GM12878 (cell line): ENCODE measurements at regions of chr19 and their contacts with region 1.

Region 1: DNA sequence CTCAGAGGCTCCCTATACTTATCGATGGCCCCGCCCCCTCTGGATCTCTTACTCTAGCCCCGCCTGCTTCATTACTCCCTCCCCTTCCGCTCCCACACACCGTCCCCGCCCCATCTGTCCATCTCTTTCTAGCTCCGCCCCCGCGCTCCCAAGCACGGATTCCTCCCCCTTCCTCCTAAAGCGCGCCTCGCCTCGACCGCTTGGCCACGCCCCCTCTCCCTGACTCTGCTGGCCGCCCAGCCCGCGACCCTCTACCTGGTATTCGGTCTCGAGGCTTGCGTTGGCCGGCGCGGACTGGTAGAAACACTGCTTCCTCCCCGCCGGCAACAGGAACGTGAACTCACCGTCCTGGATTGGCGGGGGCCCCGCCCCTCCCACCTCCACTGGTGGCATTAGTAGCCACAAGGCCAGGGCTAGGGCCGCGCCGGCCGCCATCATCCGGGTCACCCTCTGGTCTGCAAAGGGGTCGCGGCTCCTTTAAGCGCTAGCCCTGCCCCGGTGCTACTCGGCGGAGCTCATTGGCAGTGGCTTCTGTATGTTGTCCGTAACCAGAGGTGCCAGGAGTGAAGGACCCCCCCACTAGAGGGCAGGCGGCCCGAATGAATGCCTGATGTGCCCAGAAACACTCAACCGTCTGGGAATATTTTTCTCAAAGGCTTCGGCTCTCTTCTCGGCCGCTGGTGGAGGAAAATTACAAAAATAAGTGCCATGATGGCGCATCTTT is at the start of gene TMED1:
- DNase-seq: peak; percentile 91
- ATAC-seq: peak; percentile 98
- H3K4me3 ChIP-seq: peak within 1 kb of the TSS; percentile 78
- H3K27ac ChIP-seq: peak within 1 kb of the TSS; percentile 89
- H3K4me1 ChIP-seq: peaks cover 12% of the 10 kb centered on the region
- H3K27me3 ChIP-seq: no peaks in the 10 kb centered on the region
- CTCF ChIP-seq: peak in 1 of 3 experiments; percentile 42; a peak in 1 of 6 replicates
- EP300 ChIP-seq: no peak
- POLR2A ChIP-seq: peak; percentile 86
- RAD21 ChIP-seq: no peak
- polyA plus RNA-seq, gene TMED1: 0.60 to 2.8 TPM

Region 2: DNA sequence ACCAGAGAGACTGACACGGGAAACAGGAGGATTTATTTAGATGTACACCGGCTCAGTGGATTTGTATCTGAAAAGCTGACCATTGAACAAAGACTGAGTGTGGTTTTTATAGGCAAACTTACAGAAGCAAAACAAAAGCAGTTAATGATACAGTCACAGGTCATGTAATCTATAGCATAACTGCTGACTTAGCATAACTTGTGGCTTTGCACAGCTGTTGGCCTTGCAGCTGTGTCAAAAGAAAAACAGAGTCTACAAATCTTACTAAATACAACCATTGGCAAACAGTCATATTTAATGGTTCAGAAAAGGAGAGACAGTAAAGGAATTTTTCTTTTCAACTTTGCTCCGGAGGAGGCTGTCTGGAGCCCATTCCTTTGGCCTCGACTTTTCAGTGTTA is 184.1 kb before region 1 on chr19:
- CTCF ChIA-PET with region 1: no interaction called
- POLR2A ChIA-PET with region 1: no interaction called
- RAD21 ChIA-PET with region 1: no interaction called
- SMC1A ChIA-PET with region 1: no interaction called
- in situ Hi-C with region 1: no loop called
- intact Hi-C with region 1: no loop called
- DNase-seq: no peak
- ATAC-seq: no peak
- H3K4me3 ChIP-seq: no peak overlapping the region
- H3K27ac ChIP-seq: no peak overlapping the region
- H3K4me1 ChIP-seq: peaks cover 3% of the 10 kb centered on the region; the same call in 1 of the 2 replicates
- H3K27me3 ChIP-seq: no peaks in the 10 kb centered on the region
- CTCF ChIP-seq: no peak
- EP300 ChIP-seq: no peak
- POLR2A ChIP-seq: no peak
- RAD21 ChIP-seq: no peak

Region 3: GRCh38 chr19:10760273-10760944 is 75.5 kb before region 1 on chr19:
- CTCF ChIA-PET with region 1: interaction called, 3 read pairs
- POLR2A ChIA-PET with region 1: interaction called, 5 read pairs
- RAD21 ChIA-PET with region 1: interaction called, 6 read pairs
- SMC1A ChIA-PET with region 1: interaction called, 10 read pairs
- in situ Hi-C with region 1: no loop called
- intact Hi-C with region 1: no loop called
- DNase-seq: no peak
- ATAC-seq: peak; percentile 57
- H3K4me3 ChIP-seq: peak overlapping the region; percentile 57; the same call in 1 of the 2 replicates
- H3K27ac ChIP-seq: peak overlapping the region; percentile 82
- H3K4me1 ChIP-seq: peaks cover 15% of the 10 kb centered on the region
- H3K27me3 ChIP-seq: no peaks in the 10 kb centered on the region
- CTCF ChIP-seq: no peak
- EP300 ChIP-seq: no peak
- POLR2A ChIP-seq: no peak
- RAD21 ChIP-seq: no peak

Region 4: GRCh38 chr19:10870955-10871603 is 35.2 kb after region 1 on chr19 and contains the start of gene CARM1:
- CTCF ChIA-PET with region 1: interaction called, 68 read pairs
- POLR2A ChIA-PET with region 1: interaction called, 8 read pairs
- RAD21 ChIA-PET with region 1: interaction called, 32 read pairs
- SMC1A ChIA-PET with region 1: interaction called, 9 read pairs
- in situ Hi-C with region 1: no loop called
- intact Hi-C with region 1: no loop called
- DNase-seq: peak; percentile 79
- ATAC-seq: peak; percentile 84
- H3K4me3 ChIP-seq: peak within 1 kb of the TSS; percentile 68
- H3K27ac ChIP-seq: peak within 1 kb of the TSS; percentile 90
- H3K4me1 ChIP-seq: peaks cover 33% of the 10 kb centered on the region
- H3K27me3 ChIP-seq: no peaks in the 10 kb centered on the region
- CTCF ChIP-seq: peak; percentile 55 to 90 (median 66)
- EP300 ChIP-seq: no peak
- POLR2A ChIP-seq: no peak
- RAD21 ChIP-seq: peak; percentile 72
- polyA plus RNA-seq, gene CARM1: 0.45 to 0.49 TPM